ENCODE measurements at regions of chr17 and their contacts with region 1.

Region 1: DNA sequence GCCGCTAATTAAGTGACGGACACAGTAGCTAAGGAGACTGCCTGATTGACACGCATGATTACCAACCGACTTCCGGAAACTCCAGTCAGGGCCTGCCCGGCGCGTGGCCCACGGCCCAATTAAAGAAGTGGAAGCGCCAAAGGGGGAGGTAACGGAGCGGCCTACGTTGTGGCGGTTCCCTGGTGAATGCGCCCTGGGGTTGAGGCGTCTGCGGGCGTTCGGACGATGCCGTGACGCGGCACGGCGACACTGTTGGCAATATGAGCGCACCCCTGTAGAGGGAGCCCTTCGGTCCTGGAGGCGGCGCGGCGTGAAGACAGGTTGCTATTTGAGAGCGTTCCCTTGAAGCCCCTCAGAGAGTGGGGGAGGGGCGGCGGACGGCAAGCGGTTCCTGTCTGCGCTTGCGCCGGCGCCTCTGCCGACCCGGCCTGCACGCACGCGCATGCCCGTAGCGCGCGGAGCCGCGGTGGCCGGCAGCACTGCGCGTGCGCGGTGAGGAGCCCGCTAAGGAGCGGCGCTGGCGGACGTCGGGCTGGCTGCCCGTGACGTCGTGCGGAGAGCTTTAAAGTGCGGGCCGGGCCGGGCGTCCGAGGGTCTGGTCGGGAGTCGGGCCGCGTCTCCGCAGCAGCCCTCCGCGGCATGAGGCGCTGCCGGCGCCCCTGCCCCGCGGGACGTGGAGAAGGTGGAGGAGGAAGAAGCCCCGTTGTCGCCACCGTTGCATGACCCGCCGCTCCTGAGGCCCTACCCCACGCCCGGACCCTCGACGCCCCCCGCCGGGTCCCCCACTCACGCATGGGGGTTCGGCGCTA is at the start of gene ALKBH5:
- DNase-seq: peak; percentile 98 to 99
- ATAC-seq: peak; percentile 89
- H3K4me3 ChIP-seq: peak within 1 kb of the TSS; percentile 74 to 100 (median 88)
- H3K27ac ChIP-seq: peak within 1 kb of the TSS; percentile 89 to 97 (median 95)
- H3K4me1 ChIP-seq: peaks cover 45 to 46% of the 10 kb centered on the region in 2 donors
- H3K27me3 ChIP-seq: no peaks in the 10 kb centered on the region
- CTCF ChIP-seq: peak; percentile 8 to 57 (median 18)
- POLR2A ChIP-seq: peak; percentile 96 to 99
- total RNA-seq, gene ALKBH5: 188 to 271 (median 224) TPM

Region 2: GRCh38 chr17:17280613-17281549 is 902.7 kb before region 1 on chr17 and contains the start of gene COPS3:
- in situ Hi-C with region 1: no loop called
- intact Hi-C with region 1: loop called (anchors 2 kb)
- DNase-seq: peak; percentile 98 to 99
- ATAC-seq: peak; percentile 95
- H3K4me3 ChIP-seq: peak within 1 kb of the TSS; percentile 88 to 99 (median 92)
- H3K27ac ChIP-seq: peak within 1 kb of the TSS; percentile 97 to 100 (median 100)
- H3K4me1 ChIP-seq: peaks cover 39 to 41% of the 10 kb centered on the region in 2 donors
- H3K27me3 ChIP-seq: no peaks in the 10 kb centered on the region
- CTCF ChIP-seq: no peak
- POLR2A ChIP-seq: peak; percentile 90 to 91
- total RNA-seq, gene COPS3: 145 to 249 (median 175) TPM

Region 3: DNA sequence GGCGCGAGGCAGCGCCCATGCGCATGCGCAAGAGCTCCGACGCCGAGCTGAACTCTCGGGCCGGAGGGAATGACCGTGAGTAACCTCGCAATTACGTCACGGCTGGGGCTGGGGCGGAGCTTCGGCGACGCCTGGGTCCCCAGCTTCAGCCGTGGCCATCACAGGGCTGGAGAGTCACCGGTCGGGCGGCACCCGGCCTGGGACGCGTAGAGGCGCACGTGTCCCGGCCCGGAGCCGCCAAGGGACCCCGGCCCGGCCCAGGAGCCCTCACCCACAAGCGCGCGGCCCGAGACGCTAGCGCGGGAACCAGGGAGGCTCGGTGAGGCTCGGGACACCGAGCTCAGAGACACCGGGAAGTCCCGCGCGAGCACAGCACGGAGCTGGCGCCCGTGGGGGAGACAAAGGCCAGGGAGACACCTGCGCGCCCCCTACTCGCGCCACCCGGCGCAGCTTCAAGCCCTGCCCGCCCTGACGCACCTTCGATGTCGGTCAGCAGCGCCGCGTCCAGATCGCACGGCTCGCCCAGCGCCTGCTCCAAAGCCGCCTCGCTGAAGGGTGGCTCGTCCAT is 347.2 kb before region 1 on chr17:
- in situ Hi-C with region 1: no loop called
- intact Hi-C with region 1: loop called (anchors 10 kb)
- DNase-seq: peak; percentile 97 to 98
- ATAC-seq: peak; percentile 74 to 81
- H3K4me3 ChIP-seq: peak overlapping the region; percentile 79 to 89 (median 80)
- H3K27ac ChIP-seq: peak overlapping the region; percentile 97 to 100 (median 99)
- H3K4me1 ChIP-seq: peaks cover 67 to 71% of the 10 kb centered on the region in 2 donors
- H3K27me3 ChIP-seq: no peaks in the 10 kb centered on the region
- CTCF ChIP-seq: no peak
- POLR2A ChIP-seq: peak; percentile 99 to 100

Region 4: DNA sequence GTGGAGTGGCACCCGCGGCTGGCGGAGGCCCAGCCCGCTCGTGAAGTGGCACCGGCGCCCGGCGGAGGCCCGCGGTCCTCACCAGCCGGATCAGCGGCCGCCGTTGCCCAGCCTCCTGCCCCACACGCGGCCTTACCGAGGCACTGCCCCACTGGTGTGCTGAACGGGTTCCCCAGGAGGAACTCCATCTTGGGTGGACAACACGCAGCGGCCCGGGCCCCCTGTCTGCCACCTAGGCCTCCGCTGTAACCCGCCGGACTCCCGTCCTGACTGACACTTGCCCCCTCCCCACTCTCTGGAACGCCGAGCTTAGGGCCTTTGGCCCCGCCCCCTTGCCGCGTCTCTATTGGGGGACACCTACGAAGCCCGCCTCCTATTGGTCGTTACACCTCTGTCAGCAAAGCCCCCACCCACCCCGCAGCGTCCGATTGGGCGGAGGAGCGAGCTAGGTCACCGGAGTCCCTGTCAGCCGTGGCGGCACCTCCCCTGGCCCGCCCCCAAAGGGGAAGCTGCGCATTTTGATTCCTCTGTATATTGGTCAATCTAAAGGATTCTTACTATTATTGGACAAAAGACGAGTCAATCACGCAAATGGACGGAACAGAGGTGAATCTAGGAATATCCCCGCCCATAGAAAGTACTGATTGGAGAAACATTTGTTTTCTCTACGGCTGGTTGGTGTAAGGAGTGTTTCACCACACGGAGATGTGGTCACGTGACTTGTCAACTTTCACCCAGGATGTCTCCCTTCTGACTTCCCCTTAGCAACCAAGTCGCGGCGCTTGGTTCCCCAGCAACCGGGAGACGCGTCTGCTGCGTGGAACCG is 211.2 kb before region 1 on chr17 and contains the starts of genes DRC3 and TOM1L2:
- in situ Hi-C with region 1: no loop called
- intact Hi-C with region 1: loop called (anchors 5 kb)
- DNase-seq: peak; percentile 100
- ATAC-seq: peak; percentile 98
- H3K4me3 ChIP-seq: peak within 1 kb of the TSS; percentile 76 to 95 (median 90)
- H3K27ac ChIP-seq: peak within 1 kb of the TSS; percentile 87 to 97 (median 97)
- H3K4me1 ChIP-seq: peaks cover 23 to 27% of the 10 kb centered on the region in 2 donors
- H3K27me3 ChIP-seq: no peaks in the 10 kb centered on the region
- CTCF ChIP-seq: peak; percentile 10 to 57 (median 25)
- POLR2A ChIP-seq: peak; percentile 96 to 98
- total RNA-seq, gene DRC3: 0.05 to 0.81 (median 0.28) TPM
- total RNA-seq, gene TOM1L2: 55.7 to 97.1 (median 73.3) TPM

Region 5: GRCh38 chr17:18141210-18141803 is 42.2 kb before region 1 on chr17:
- in situ Hi-C with region 1: no loop called
- intact Hi-C with region 1: loop called (anchors 2 kb)
- DNase-seq: no peak
- ATAC-seq: peak; percentile 40 to 64
- H3K4me3 ChIP-seq: no peak overlapping the region
- H3K27ac ChIP-seq: no peak overlapping the region
- H3K4me1 ChIP-seq: peaks cover 0 to 10% of the 10 kb centered on the region in 2 donors
- H3K27me3 ChIP-seq: no peaks in the 10 kb centered on the region
- CTCF ChIP-seq: peak; percentile 45 to 69 (median 60)
- POLR2A ChIP-seq: no peak

Region 6: GRCh38 chr17:18153749-18154161 is 29.8 kb before region 1 on chr17:
- in situ Hi-C with region 1: no loop called
- intact Hi-C with region 1: no loop called
- DNase-seq: peak; percentile 51 to 64
- ATAC-seq: peak; percentile 72 to 77
- H3K4me3 ChIP-seq: peak overlapping the region; percentile 57 to 90 (median 66)
- H3K27ac ChIP-seq: peak overlapping the region; percentile 57 to 65 (median 62)
- H3K4me1 ChIP-seq: no peaks in the 10 kb centered on the region
- H3K27me3 ChIP-seq: no peaks in the 10 kb centered on the region
- CTCF ChIP-seq: no peak
- POLR2A ChIP-seq: no peak

Region 7: DNA sequence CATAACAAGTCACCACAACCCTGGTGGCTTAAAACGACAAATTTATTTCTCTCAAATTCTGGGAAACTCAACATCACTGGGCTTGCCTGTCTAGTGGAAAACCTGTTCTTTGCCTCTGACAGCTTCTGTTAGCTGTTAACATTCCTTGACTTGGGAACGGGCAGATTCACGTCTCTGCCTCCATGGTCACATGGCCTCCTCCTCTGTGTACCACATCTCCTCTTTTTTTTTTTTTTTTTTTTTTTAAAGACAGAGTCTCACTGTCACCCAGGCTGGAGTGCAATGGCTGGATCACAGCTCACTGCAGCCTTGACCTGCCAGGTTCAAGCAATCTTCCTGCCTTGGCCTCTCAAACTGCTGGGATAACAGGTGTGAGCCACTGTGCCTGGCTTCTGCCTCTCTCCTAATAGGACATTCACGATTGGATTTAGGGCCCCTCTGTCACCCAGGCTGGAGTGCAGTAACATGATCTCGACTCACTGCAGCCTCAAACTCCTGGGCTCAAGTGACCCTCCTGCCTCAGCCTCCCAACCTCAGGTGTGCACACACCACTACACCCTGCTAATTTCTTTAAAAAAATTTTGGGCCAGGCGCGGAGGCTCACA is 30.2 kb after region 1 on chr17:
- in situ Hi-C with region 1: no loop called
- intact Hi-C with region 1: no loop called
- DNase-seq: no peak
- ATAC-seq: no peak
- H3K4me3 ChIP-seq: no peak overlapping the region
- H3K27ac ChIP-seq: no peak overlapping the region
- H3K4me1 ChIP-seq: no peaks in the 10 kb centered on the region
- H3K27me3 ChIP-seq: no peaks in the 10 kb centered on the region
- CTCF ChIP-seq: no peak
- POLR2A ChIP-seq: no peak

Region 8: GRCh38 chr17:18225121-18225566 is 41.6 kb after region 1 on chr17:
- in situ Hi-C with region 1: no loop called
- intact Hi-C with region 1: loop called (anchors 2 kb)
- DNase-seq: peak; percentile 93 to 95
- ATAC-seq: peak; percentile 91
- H3K4me3 ChIP-seq: peak overlapping the region; percentile 50 to 67 (median 59)
- H3K27ac ChIP-seq: peak overlapping the region; percentile 65 to 72 (median 71)
- H3K4me1 ChIP-seq: peaks cover 16 to 17% of the 10 kb centered on the region in 2 donors
- H3K27me3 ChIP-seq: no peaks in the 10 kb centered on the region
- CTCF ChIP-seq: no peak
- POLR2A ChIP-seq: no peak

Region 9: GRCh38 chr17:18260332-18261144 is 77.0 kb after region 1 on chr17 and contains the start of gene MIEF2:
- in situ Hi-C with region 1: no loop called
- intact Hi-C with region 1: loop called (anchors 1 kb)
- DNase-seq: peak; percentile 96 to 97
- ATAC-seq: peak; percentile 66 to 75
- H3K4me3 ChIP-seq: peak within 1 kb of the TSS; percentile 90 to 94 (median 90)
- H3K27ac ChIP-seq: peak within 1 kb of the TSS; percentile 98 to 100 (median 99)
- H3K4me1 ChIP-seq: peaks cover 58 to 61% of the 10 kb centered on the region in 2 donors
- H3K27me3 ChIP-seq: no peaks in the 10 kb centered on the region
- CTCF ChIP-seq: peak in 1 of 5 experiments; percentile 9
- POLR2A ChIP-seq: peak; percentile 78 to 79
- total RNA-seq, gene MIEF2: 19.3 to 45.2 (median 34.3) TPM

Measured in gastrocnemius medialis (tissue), 4 donors.